Activated CD4-positive, alpha-beta memory T cell treated with anti-CD3 and anti-CD28 coated beads for 36 hours (primary cell): ENCODE measurements at regions of chr14 and their contacts with region 1.

Region 1: GRCh38 chr14:60800409-60800808 is 65.8 kb downstream of the MNAT1 start:
- DNase-seq: no peak
- H3K4me3 Mint-ChIP-seq: no peak overlapping the region
- H3K27ac Mint-ChIP-seq: no peak overlapping the region
- H3K4me1 Mint-ChIP-seq: no peaks in the 10 kb centered on the region
- H3K27me3 Mint-ChIP-seq: no peaks in the 10 kb centered on the region

Region 2: GRCh38 chr14:60734465-60735242 is 65.8 kb before region 1 on chr14 and contains the start of gene MNAT1:
- CTCF ChIA-PET with region 1: no interaction called
- POLR2A ChIA-PET with region 1: no interaction called
- intact Hi-C with region 1: loop called (anchors 2 kb)
- DNase-seq: peak; percentile 85
- H3K4me3 Mint-ChIP-seq: peak within 1 kb of the TSS; percentile 95
- H3K27ac Mint-ChIP-seq: peak within 1 kb of the TSS; percentile 67
- H3K4me1 Mint-ChIP-seq: peaks cover 15% of the 10 kb centered on the region
- H3K27me3 Mint-ChIP-seq: peaks cover 16% of the 10 kb centered on the region
- total RNA-seq, gene MNAT1: 35.3 to 38.5 TPM